ENCODE measurements at regions of chr5 and their contacts with region 1.

Region 1: GRCh38 chr5:67246108-67246507 is 49.5 kb upstream of the CD180 start:
- DNase-seq: peak; percentile 42 to 64 (median 62)
- H3K4me3 ChIP-seq: no peak overlapping the region
- H3K4me3 Mint-ChIP-seq: no peak overlapping the region
- H3K27ac ChIP-seq: no peak overlapping the region
- H3K27ac Mint-ChIP-seq: no peak overlapping the region
- H3K4me1 ChIP-seq: peaks cover 5 to 10% of the 10 kb centered on the region in 2 donors
- H3K4me1 Mint-ChIP-seq: peaks cover 8% of the 10 kb centered on the region
- H3K27me3 ChIP-seq: no peaks in the 10 kb centered on the region
- H3K27me3 Mint-ChIP-seq: peaks cover 0 to 2% (median 1%) of the 10 kb centered on the region in 3 donors
- CTCF ChIP-seq: peak; percentile 77

Region 2: DNA sequence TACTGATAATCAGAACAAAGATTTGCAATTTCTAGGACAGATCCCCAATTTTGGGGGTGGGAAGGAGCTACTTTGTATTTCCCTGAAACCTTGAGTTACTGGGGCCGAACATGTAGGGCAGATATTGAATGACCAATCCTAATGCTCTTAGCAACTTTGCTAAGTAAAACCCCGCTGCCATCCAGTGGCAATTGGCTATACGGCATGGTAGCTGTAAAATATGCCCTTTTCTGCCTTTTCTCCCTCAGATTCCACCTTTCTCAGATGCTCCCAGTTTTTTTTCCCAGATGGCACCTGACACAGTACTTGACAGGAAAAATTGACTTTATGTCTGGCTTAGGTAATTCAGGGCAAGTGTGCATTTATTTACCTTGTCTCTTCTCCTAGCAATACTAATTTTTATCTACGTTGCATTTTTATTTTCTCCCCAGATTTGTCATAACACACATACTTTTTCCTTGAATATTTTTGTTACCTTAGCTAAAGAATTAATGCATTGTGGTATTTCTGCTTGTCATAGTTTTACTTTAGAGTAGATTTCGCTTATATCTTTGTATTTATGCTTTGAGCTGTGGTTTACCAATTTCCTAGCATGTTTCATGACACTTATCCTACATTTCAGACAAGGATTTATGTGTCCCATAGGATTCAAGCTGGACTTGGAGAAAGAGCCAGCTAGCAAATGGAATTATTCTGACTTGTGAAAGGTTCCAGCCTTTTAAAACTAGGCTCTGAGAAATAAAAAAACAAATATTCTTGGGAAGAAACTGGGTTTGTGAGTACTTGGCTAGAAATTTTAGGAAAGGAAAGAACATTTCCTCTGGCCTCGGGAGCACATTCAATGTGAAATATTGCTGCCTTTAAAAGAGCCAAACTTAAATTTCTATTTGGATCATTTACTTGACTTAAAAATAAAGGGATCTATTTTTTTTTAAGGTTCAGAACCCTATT is 1006.8 kb after region 1 on chr5:
- intact Hi-C with region 1: loop called (anchors 5 to 10 kb)
- DNase-seq: peak; percentile 47 to 70 (median 64)
- H3K4me3 ChIP-seq: no peak overlapping the region
- H3K4me3 Mint-ChIP-seq: no peak overlapping the region
- H3K27ac ChIP-seq: no peak overlapping the region
- H3K27ac Mint-ChIP-seq: peak overlapping the region in 1 of 7 donors; percentile 54
- H3K4me1 ChIP-seq: peaks cover 28 to 46% of the 10 kb centered on the region in 2 donors
- H3K4me1 Mint-ChIP-seq: peaks cover 67% of the 10 kb centered on the region
- H3K27me3 ChIP-seq: no peaks in the 10 kb centered on the region
- H3K27me3 Mint-ChIP-seq: no peaks in the 10 kb centered on the region
- CTCF ChIP-seq: peak; percentile 84

Region 3: GRCh38 chr5:68272289-68272688 is 1026.2 kb after region 1 on chr5:
- intact Hi-C with region 1: loop called in 1 of 2 experiments (anchors 5 kb)
- DNase-seq: no peak
- H3K4me3 ChIP-seq: no peak overlapping the region
- H3K4me3 Mint-ChIP-seq: no peak overlapping the region
- H3K27ac ChIP-seq: peak overlapping the region in 1 of 2 donors; percentile 21
- H3K27ac Mint-ChIP-seq: no peak overlapping the region
- H3K4me1 ChIP-seq: peaks cover 12 to 21% of the 10 kb centered on the region in 2 donors
- H3K4me1 Mint-ChIP-seq: peaks cover 25% of the 10 kb centered on the region
- H3K27me3 ChIP-seq: no peaks in the 10 kb centered on the region
- H3K27me3 Mint-ChIP-seq: no peaks in the 10 kb centered on the region
- CTCF ChIP-seq: peak; percentile 58

Measured in CD14-positive monocyte (primary cell).